H1 (cell line): ENCODE measurements at regions of chr13 and their contacts with region 1.

Region 1: DNA sequence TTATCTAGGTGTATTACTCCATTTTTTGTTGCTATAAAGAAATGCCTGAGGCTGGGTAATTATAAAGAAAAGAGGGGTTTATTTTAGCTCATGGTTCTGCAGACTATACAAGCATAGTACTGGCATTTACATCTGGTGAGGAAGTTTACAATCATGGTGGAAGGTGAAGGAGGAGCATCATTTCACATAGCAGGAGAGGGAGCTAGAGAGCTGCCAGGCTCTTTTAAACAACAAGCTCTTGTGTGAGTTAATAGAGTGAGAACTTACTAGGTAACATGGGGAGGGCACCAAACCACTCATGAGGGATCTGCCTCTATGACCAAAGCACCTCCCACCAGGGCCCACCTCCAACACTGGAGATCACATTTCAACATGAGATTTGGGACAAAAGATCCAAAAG is 221.7 kb upstream of the GPC6 start:
- DNase-seq: peak in 1 of 2 experiments; percentile 10
- H3K4me3 ChIP-seq: no peak overlapping the region
- H3K27ac ChIP-seq: no peak overlapping the region
- H3K4me1 ChIP-seq: no peaks in the 10 kb centered on the region
- H3K27me3 ChIP-seq: no peaks in the 10 kb centered on the region
- CTCF ChIP-seq: peak in 2 of 3 experiments; percentile 54 to 65; a peak in 3 of 4 replicates
- EP300 ChIP-seq: no peak
- POLR2A ChIP-seq: no peak
- RAD21 ChIP-seq: peak; percentile 73 to 77

Region 2: DNA sequence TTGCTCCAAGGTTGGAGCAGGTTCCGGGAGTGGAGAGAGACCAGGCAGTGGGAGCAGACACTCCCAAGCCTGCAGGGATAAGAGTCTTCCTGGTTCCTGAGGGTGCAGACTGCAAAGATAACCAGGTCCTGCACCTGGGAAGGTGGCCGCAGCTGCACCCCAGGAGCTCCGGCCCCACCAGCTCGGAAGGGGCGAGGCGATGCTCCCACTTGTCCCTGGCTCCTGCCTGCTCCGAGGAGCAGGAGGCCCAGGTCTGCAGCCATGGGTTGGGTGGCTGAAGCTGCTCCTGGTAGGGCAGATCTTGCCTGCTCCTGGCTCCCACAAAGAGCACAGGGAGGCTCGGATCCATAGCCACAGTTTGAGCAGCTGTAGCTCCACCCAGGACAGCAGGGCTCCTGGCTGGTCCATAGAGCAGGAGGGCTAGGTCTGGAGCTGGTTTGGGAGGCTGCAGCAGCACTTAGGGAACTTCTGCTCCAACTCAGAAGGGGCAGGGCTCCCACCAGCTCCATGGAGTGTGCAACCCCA is 30.0 kb before region 1 on chr13:
- CTCF ChIA-PET with region 1: no interaction called
- POLR2A ChIA-PET with region 1: no interaction called
- DNase-seq: no peak
- H3K4me3 ChIP-seq: no peak overlapping the region
- H3K27ac ChIP-seq: no peak overlapping the region
- H3K4me1 ChIP-seq: no peaks in the 10 kb centered on the region
- H3K27me3 ChIP-seq: no peaks in the 10 kb centered on the region
- CTCF ChIP-seq: no peak
- EP300 ChIP-seq: no peak
- POLR2A ChIP-seq: no peak
- RAD21 ChIP-seq: no peak

Region 3: DNA sequence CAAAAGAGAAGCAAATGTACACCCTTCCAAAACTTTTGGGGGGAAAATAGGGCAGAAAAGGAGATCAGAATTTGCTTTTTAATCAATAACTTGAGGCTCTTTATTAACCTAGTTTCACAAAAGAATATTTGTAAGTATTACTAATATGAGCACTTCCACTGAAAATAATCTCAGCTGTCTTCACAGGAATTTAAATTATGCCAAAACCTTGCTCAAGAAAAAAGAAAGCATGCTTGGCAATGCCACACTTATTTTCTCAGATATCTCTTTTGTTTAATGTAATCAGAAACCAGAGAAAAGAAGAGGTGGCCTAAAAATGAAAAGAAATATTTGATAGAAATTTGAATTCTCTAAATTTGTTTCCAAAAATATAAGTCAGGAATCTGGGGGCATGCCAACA is 13.2 kb before region 1 on chr13:
- CTCF ChIA-PET with region 1: no interaction called
- POLR2A ChIA-PET with region 1: no interaction called
- DNase-seq: no peak
- H3K4me3 ChIP-seq: no peak overlapping the region
- H3K27ac ChIP-seq: no peak overlapping the region
- H3K4me1 ChIP-seq: no peaks in the 10 kb centered on the region
- H3K27me3 ChIP-seq: no peaks in the 10 kb centered on the region
- CTCF ChIP-seq: no peak
- EP300 ChIP-seq: no peak
- POLR2A ChIP-seq: no peak
- RAD21 ChIP-seq: no peak

Region 4: GRCh38 chr13:93116809-93117208 is 111.9 kb after region 1 on chr13:
- CTCF ChIA-PET with region 1: interaction called, 16 read pairs
- POLR2A ChIA-PET with region 1: no interaction called
- DNase-seq: no peak
- H3K4me3 ChIP-seq: no peak overlapping the region
- H3K27ac ChIP-seq: no peak overlapping the region
- H3K4me1 ChIP-seq: no peaks in the 10 kb centered on the region
- H3K27me3 ChIP-seq: no peaks in the 10 kb centered on the region
- CTCF ChIP-seq: peak in 1 of 3 experiments; percentile 30; a peak in 2 of 4 replicates
- EP300 ChIP-seq: no peak
- POLR2A ChIP-seq: no peak
- RAD21 ChIP-seq: peak; percentile 67 to 68